Breast epithelium (tissue), 4 donors: ENCODE measurements at regions of chr3 and their contacts with region 1.

Region 1: DNA sequence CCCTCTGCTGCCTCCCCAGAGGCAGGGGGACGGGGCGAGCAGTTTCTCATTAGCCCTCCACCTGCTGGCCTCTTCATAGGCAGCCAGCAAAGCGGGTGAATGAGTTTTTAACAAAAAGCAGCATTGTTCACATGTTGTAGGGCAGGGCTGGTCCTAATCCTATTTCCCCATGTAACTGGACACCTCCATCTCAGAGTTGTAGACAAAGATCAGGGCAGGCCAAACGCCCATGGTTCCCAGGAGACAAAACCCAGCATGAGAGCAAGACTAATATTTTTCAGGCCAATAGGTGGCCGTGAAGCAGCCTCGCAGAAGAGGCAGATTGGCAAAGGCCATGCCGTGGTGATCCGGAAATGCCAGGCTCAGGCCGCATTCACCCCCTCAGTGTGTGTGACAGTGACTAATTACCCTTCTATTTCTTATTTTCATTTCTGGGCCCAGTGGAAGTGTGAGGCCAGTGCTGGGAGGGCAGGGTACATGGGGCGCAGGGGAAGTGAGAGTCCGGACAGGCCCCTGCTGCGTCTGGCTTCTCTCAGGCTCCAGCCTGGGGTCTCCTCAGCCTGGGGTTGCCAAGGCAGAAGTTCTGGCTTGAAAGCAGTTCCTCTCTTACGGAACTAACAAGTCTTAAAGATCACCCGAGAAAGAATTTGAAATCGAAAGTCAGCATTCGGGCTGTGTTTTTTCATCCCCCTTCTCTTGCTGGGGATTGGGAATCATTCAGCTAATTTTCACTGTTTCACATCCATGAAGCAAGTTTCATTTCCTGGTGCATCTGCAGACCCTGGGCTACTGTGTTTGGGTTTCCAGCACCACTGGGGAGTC is 64.8 kb downstream of the BOC start:
- DNase-seq: peak in 1 of 2 donors; percentile 49
- H3K4me3 ChIP-seq: peak overlapping the region; percentile 22 to 48 (median 31)
- H3K27ac ChIP-seq: peak overlapping the region; percentile 88 to 92
- H3K4me1 ChIP-seq: peaks cover 0 to 11% of the 10 kb centered on the region in 2 donors
- H3K27me3 ChIP-seq: no peaks in the 10 kb centered on the region
- CTCF ChIP-seq: peak in 1 of 3 donors; percentile 26
- POLR2A ChIP-seq: no peak

Region 2: GRCh38 chr3:112405845-112406244 is 870.3 kb before region 1 on chr3:
- intact Hi-C with region 1: no loop called
- DNase-seq: no peak
- H3K4me3 ChIP-seq: no peak overlapping the region
- H3K27ac ChIP-seq: no peak overlapping the region
- H3K4me1 ChIP-seq: no peaks in the 10 kb centered on the region
- H3K27me3 ChIP-seq: no peaks in the 10 kb centered on the region
- CTCF ChIP-seq: no peak
- POLR2A ChIP-seq: no peak

Region 3: DNA sequence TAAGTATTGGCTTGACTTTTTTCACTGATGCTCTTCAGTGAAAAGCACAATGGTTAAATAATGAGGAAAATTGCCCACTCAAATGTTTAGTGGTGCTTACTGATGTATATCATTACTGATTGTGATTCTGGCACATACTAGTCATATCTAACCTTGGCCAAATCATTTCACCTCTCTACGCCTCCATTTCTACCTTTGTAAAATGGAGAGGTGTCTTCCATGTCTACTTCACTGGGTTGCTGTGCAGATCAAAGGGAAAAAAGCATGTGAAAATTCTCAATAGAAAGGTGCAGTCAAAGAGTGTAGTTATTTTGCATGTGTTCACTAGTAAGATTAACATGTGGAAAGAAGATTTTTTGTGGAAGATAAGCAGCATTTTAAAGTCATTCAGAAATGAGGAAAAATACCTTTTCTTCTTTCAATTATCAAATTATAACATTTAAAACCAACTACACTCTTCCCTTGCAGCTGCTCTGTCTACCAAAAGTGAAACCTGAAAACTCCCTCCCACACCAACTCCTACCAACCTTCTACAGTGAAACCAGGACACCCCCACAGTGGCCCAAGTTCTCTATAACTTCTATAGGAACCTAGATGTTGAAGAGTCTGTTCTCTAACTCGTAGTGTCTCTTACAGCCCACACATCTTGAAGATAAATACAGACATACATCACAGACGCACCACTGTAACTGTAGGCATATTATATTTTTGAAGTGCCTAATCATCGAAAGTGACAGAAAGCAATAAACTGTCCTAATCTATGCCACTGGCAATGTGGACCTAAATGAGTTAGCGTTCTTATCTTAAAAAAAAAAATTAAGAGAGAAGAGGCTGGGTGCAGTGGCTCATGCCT is 302.6 kb before region 1 on chr3:
- intact Hi-C with region 1: no loop called
- DNase-seq: no peak
- H3K4me3 ChIP-seq: peak overlapping the region in 2 of 3 donors; percentile 13 to 21
- H3K27ac ChIP-seq: no peak overlapping the region
- H3K4me1 ChIP-seq: no peaks in the 10 kb centered on the region
- H3K27me3 ChIP-seq: no peaks in the 10 kb centered on the region
- CTCF ChIP-seq: no peak
- POLR2A ChIP-seq: no peak

Region 4: DNA sequence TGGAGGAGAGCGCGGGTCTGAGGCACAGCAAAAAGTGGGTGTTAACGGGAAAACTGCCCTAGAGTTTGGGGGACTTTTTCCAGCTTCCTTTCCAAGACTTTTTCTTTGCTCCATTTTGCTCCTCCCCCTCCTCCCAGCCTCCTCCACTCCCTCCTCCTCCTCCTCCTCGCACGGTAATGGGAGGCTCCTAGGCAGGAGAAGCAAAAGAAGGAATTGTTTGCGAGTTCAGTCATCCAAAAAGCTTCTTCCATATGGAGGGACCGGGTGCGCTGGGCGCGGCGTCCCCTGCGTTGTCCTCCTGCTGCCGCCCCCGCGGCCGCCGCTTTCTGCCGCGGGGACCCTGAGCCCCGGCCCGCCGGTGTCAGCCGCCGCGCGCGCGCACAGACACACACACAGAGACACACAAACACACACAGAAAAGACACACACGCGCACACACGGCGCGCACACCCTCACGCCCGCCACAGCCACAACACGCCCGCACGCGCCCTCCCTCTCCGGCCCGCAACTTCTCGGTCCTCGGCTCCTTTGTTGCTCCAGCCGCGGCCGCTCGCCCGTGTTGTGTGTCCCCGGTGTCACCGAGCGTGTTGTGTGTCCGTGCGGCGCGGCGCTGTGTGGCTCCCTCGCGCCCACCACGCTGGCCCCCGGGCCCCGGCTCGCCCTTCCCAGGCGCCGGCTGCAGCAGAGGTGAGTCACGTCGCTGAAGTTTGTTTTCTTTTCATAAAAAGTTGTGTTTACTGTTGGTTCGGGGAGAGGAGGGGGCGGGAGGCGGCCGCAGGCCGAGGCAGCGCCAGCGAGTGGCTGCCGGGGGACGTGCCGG is 64.6 kb before region 1 on chr3 and contains the start of gene BOC:
- intact Hi-C with region 1: loop called (anchors 1 kb)
- DNase-seq: no peak
- H3K4me3 ChIP-seq: peak within 1 kb of the TSS; percentile 77 to 86 (median 85)
- H3K27ac ChIP-seq: peak within 1 kb of the TSS; percentile 93 to 99
- H3K4me1 ChIP-seq: peaks cover 0 to 3% of the 10 kb centered on the region in 2 donors
- H3K27me3 ChIP-seq: no peaks in the 10 kb centered on the region
- CTCF ChIP-seq: no peak
- POLR2A ChIP-seq: peak; percentile 15
- total RNA-seq, gene BOC: 48.8 to 56.6 (median 55.1) TPM

Region 5: GRCh38 chr3:114389156-114389555 is 1113.0 kb after region 1 on chr3:
- intact Hi-C with region 1: loop called (anchors 5 kb)
- DNase-seq: no peak
- H3K4me3 ChIP-seq: no peak overlapping the region
- H3K27ac ChIP-seq: no peak overlapping the region
- H3K4me1 ChIP-seq: no peaks in the 10 kb centered on the region
- H3K27me3 ChIP-seq: no peaks in the 10 kb centered on the region
- CTCF ChIP-seq: no peak
- POLR2A ChIP-seq: no peak

Region 6: GRCh38 chr3:114727373-114727772 is 1451.2 kb after region 1 on chr3:
- intact Hi-C with region 1: loop called (anchors 5 kb)
- DNase-seq: no peak
- H3K4me3 ChIP-seq: no peak overlapping the region
- H3K27ac ChIP-seq: no peak overlapping the region
- H3K4me1 ChIP-seq: no peaks in the 10 kb centered on the region
- H3K27me3 ChIP-seq: no peaks in the 10 kb centered on the region
- CTCF ChIP-seq: no peak
- POLR2A ChIP-seq: no peak